AG04449 (cell line): ENCODE measurements at regions of chr15 and their contacts with region 1.

Region 1: DNA sequence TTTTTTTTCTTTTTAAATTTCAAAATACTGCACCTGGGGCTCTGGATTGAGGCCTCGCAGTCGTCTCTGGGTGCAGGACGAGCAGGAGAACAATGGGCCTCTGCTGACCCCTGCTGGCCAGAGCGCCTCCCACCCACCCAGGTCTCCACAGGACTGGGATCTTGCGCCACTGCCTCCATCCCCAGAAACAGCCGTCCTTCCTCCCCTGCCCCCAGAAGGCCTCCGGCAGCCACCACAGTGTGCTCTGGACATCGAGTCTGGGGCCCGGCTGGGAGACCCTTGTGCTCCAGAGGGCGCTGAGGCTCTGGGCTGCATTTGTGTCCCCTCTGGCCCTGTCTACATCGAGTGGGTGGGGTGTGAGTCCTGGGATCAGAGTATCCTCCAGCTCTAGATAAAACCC is 6.6 kb upstream of the ACSBG1 start:
- DNase-seq: no peak
- H3K4me3 ChIP-seq: no peak overlapping the region
- CTCF ChIP-seq: peak; percentile 96

Region 2: GRCh38 chr15:77959432-77959879 is 281.6 kb before region 1 on chr15:
- CTCF ChIA-PET with region 1: interaction called, 65 read pairs
- POLR2A ChIA-PET with region 1: no interaction called
- DNase-seq: no peak
- H3K4me3 ChIP-seq: peak overlapping the region; percentile 34
- CTCF ChIP-seq: peak; percentile 92

Region 3: DNA sequence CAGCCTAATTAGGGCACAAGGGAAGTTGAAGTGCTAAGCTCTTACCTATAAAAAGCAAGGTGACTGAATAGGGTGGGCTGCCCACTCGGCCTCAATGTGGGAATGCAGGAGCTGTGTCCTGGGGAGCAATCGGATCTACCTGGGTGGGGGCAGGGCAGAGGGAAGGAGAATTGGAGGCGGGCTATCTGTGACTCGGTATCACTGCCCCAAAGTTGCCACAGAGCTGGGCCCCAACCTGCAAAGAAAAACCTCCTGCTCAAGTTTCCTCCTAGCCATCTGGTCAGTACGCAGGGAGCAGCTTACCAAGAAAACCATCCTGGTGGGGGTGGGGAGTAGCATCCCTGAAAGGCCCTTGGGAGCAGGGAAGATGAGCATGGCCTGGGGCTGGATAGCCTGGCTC is 120.5 kb before region 1 on chr15:
- CTCF ChIA-PET with region 1: interaction called, 352 read pairs
- POLR2A ChIA-PET with region 1: no interaction called
- DNase-seq: no peak
- H3K4me3 ChIP-seq: no peak overlapping the region
- CTCF ChIP-seq: no peak

Region 4: GRCh38 chr15:78177447-78177873 is 63.5 kb before region 1 on chr15:
- CTCF ChIA-PET with region 1: interaction called, 127 read pairs
- POLR2A ChIA-PET with region 1: no interaction called
- DNase-seq: no peak
- H3K4me3 ChIP-seq: no peak overlapping the region
- CTCF ChIP-seq: peak; percentile 74

Region 5: DNA sequence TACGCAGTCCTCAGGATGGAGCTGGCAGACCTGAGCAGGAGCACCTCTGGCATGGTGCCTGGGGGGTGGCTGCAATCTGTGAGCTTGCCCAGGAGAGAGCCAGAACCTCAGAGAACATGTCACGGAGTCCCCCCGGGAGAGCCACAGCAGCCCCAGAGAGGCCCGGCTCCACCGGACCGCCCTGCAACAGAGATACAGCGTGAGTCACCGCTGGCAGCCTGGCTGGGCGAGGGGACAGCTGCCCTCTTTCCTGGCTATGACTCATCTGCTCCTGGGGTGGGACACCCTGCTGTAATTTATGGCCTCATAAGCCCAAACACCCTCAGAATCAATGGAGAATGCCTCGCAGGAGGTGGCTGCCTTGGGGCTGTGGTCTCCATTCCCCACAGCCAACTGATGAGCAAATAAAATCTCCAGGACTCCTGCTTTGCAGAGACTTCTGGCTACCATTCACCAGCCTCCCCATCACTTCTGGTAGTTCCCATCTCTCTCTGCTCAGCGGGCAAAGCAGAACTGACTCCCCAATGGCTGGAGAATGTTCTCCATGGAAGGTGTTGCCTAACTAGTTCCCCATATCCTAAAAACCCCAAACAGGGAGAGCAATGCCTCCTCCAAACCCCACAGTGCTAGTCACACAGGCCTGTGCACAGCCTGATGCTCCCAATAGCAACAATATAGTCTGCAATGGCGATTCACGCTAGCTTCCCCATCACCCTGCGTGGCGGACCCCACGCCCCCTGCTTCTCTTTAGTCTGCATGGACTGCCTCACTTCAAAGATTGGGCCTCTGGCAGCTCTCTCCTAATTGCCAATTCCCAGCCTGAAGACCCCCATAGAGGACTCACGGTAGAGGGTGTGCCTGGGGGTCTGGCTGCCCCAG is 28.2 kb before region 1 on chr15:
- CTCF ChIA-PET with region 1: interaction called, 35 read pairs
- POLR2A ChIA-PET with region 1: no interaction called
- DNase-seq: no peak
- H3K4me3 ChIP-seq: no peak overlapping the region
- CTCF ChIP-seq: no peak

Region 6: GRCh38 chr15:78264304-78265136 is 23.5 kb after region 1 on chr15 and contains the start of gene DNAJA4:
- CTCF ChIA-PET with region 1: interaction called, 102 read pairs
- POLR2A ChIA-PET with region 1: no interaction called
- DNase-seq: no peak
- H3K4me3 ChIP-seq: peak within 1 kb of the TSS; percentile 43
- CTCF ChIP-seq: no peak

Region 7: DNA sequence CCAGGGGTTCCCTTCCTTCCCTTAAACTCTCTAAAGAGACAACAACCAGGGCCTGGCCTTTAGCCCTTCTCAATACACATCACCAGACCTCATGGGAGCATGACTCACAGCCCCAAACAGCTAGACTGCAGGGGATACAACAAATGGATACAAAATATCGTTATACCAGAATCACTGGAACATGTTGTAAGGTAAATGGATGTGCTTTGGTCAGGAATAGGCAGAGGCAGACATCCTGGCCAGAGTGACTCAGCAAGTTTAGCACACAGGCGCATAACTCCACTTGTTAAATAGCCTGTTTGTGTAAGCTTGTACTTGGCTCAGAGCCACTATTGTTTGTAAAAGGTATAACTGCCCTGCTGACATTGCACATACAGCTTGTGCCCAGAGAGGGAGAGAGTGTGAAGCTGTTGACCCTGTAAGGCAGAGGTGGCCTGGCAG is 1088.2 kb after region 1 on chr15:
- CTCF ChIA-PET with region 1: no interaction called
- POLR2A ChIA-PET with region 1: no interaction called
- DNase-seq: no peak
- H3K4me3 ChIP-seq: no peak overlapping the region
- CTCF ChIP-seq: no peak